ENCODE measurements at regions of chr7 and their contacts with region 1.

Region 1: GRCh38 chr7:38369816-38370493 is 96.5 kb upstream of the TARP start:
- DNase-seq: peak; percentile 42 to 89 (median 73)
- ATAC-seq: peak in 3 of 4 experiments; percentile 55 to 58 (median 58)
- H3K4me3 ChIP-seq: no peak overlapping the region
- H3K4me3 Mint-ChIP-seq: peak overlapping the region; percentile 40 to 58 (median 46)
- H3K27ac ChIP-seq: peak overlapping the region; percentile 59
- H3K27ac Mint-ChIP-seq: peak overlapping the region; percentile 91
- H3K4me1 ChIP-seq: peaks cover 27 to 50% of the 10 kb centered on the region in 2 experiments
- H3K4me1 Mint-ChIP-seq: peaks cover 69 to 75% (median 71%) of the 10 kb centered on the region in 3 donors
- H3K27me3 ChIP-seq: no peaks in the 10 kb centered on the region
- H3K27me3 Mint-ChIP-seq: no peaks in the 10 kb centered on the region

Region 2: GRCh38 chr7:38107486-38107893 is 262.5 kb before region 1 on chr7:
- CTCF ChIA-PET with region 1: interaction called, 39 to 42 read pairs
- POLR2A ChIA-PET with region 1: no interaction called
- DNase-seq: peak; percentile 21 to 80 (median 55)
- ATAC-seq: peak; percentile 71 to 80 (median 78)
- H3K4me3 ChIP-seq: no peak overlapping the region
- H3K4me3 Mint-ChIP-seq: no peak overlapping the region
- H3K27ac ChIP-seq: no peak overlapping the region
- H3K27ac Mint-ChIP-seq: no peak overlapping the region
- H3K4me1 ChIP-seq: no peaks in the 10 kb centered on the region
- H3K4me1 Mint-ChIP-seq: peaks cover 0 to 2% (median 0%) of the 10 kb centered on the region in 3 donors
- H3K27me3 ChIP-seq: peaks cover 0 to 4% of the 10 kb centered on the region in 2 experiments
- H3K27me3 Mint-ChIP-seq: peaks cover 6 to 8% of the 10 kb centered on the region in 2 donors

Region 3: GRCh38 chr7:38222481-38223096 is 147.4 kb before region 1 on chr7:
- CTCF ChIA-PET with region 1: interaction called, 104 to 161 read pairs
- POLR2A ChIA-PET with region 1: interaction called in 1 of 2 experiments, 3 read pairs
- DNase-seq: peak in 10 of 35 experiments; percentile 10 to 85 (median 22)
- ATAC-seq: peak; percentile 64 to 78 (median 74)
- H3K4me3 ChIP-seq: no peak overlapping the region
- H3K4me3 Mint-ChIP-seq: no peak overlapping the region
- H3K27ac ChIP-seq: peak overlapping the region; percentile 68
- H3K27ac Mint-ChIP-seq: peak overlapping the region; percentile 84 to 90
- H3K4me1 ChIP-seq: peaks cover 0 to 42% of the 10 kb centered on the region in 2 experiments
- H3K4me1 Mint-ChIP-seq: peaks cover 10 to 61% (median 54%) of the 10 kb centered on the region in 3 donors
- H3K27me3 ChIP-seq: no peaks in the 10 kb centered on the region
- H3K27me3 Mint-ChIP-seq: no peaks in the 10 kb centered on the region

Region 4: GRCh38 chr7:38315410-38315809 is 54.5 kb before region 1 on chr7:
- CTCF ChIA-PET with region 1: no interaction called
- POLR2A ChIA-PET with region 1: no interaction called
- DNase-seq: no peak
- ATAC-seq: no peak
- H3K4me3 ChIP-seq: no peak overlapping the region
- H3K4me3 Mint-ChIP-seq: no peak overlapping the region
- H3K27ac ChIP-seq: no peak overlapping the region
- H3K27ac Mint-ChIP-seq: no peak overlapping the region
- H3K4me1 ChIP-seq: peaks cover 10 to 26% of the 10 kb centered on the region in 2 experiments
- H3K4me1 Mint-ChIP-seq: peaks cover 25 to 45% (median 27%) of the 10 kb centered on the region in 3 donors
- H3K27me3 ChIP-seq: no peaks in the 10 kb centered on the region
- H3K27me3 Mint-ChIP-seq: no peaks in the 10 kb centered on the region

Region 5: DNA sequence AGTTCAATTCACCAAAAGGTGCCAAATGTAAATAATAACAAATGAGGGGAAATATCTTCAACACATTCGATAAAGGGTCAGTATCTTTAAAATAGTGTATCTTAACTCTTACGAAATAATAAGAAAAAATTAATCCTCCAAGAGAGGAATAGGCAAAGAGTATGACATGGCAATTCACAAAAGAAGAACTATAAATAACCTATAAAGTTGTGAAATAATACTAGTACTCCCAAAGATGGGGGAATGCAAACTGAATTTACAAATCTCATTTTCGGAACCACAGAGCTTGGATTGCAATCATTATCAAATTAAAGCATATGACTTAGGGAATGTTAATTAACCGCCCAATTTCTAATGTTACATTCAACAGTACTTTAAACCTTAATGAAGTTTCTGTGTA is 18.4 kb before region 1 on chr7:
- CTCF ChIA-PET with region 1: interaction called, 3 to 28 read pairs
- POLR2A ChIA-PET with region 1: interaction called in 1 of 2 experiments, 3 read pairs
- DNase-seq: no peak
- ATAC-seq: no peak
- H3K4me3 ChIP-seq: peak overlapping the region in 1 of 2 donors; percentile 2
- H3K4me3 Mint-ChIP-seq: peak overlapping the region; percentile 83 to 87 (median 86)
- H3K27ac ChIP-seq: no peak overlapping the region
- H3K27ac Mint-ChIP-seq: peak overlapping the region; percentile 98
- H3K4me1 ChIP-seq: peaks cover 3 to 22% of the 10 kb centered on the region in 2 experiments
- H3K4me1 Mint-ChIP-seq: peaks cover 62 to 71% (median 67%) of the 10 kb centered on the region in 3 donors
- H3K27me3 ChIP-seq: no peaks in the 10 kb centered on the region
- H3K27me3 Mint-ChIP-seq: no peaks in the 10 kb centered on the region

Region 6: GRCh38 chr7:38385682-38386428 is 15.9 kb after region 1 on chr7:
- CTCF ChIA-PET with region 1: interaction called, 6 to 12 read pairs
- POLR2A ChIA-PET with region 1: no interaction called
- DNase-seq: no peak
- ATAC-seq: no peak
- H3K4me3 ChIP-seq: no peak overlapping the region
- H3K4me3 Mint-ChIP-seq: no peak overlapping the region
- H3K27ac ChIP-seq: no peak overlapping the region
- H3K27ac Mint-ChIP-seq: no peak overlapping the region
- H3K4me1 ChIP-seq: no peaks in the 10 kb centered on the region
- H3K4me1 Mint-ChIP-seq: peaks cover 0 to 5% (median 0%) of the 10 kb centered on the region in 3 donors
- H3K27me3 ChIP-seq: no peaks in the 10 kb centered on the region
- H3K27me3 Mint-ChIP-seq: no peaks in the 10 kb centered on the region